ENCODE measurements at regions of chr13 and their contacts with region 1.

Region 1: DNA sequence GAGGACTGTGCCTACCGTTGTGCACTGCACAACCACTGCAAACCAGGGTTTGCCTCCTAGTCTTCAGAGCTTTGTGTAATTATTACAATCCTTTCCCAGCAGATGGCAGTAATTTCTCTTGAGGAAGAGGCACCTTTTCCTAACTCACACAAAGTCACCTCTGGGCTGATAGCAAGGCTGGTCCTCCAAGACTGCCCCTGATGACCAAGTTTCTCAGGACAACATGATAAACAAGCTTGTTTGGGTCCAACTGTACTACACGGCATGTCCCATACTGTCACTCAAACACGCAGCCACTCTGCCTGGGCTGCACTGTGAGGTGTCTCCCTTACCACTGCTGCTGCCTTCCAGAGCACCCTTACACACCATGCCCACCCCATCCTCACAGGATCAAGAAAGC is 39.3 kb downstream of the RFXAP start:
- DNase-seq: peak in 1 of 2 experiments; percentile 45
- H3K4me3 ChIP-seq: no peak overlapping the region
- H3K27ac ChIP-seq: no peak overlapping the region
- H3K4me1 ChIP-seq: peaks cover 9% of the 10 kb centered on the region
- H3K27me3 ChIP-seq: no peaks in the 10 kb centered on the region
- CTCF ChIP-seq: peak; percentile 65

Region 2: GRCh38 chr13:36981156-36981743 is 123.0 kb after region 1 on chr13:
- CTCF ChIA-PET with region 1: interaction called, 6 read pairs
- POLR2A ChIA-PET with region 1: interaction called, 6 read pairs
- intact Hi-C with region 1: loop called (anchors 5 kb)
- DNase-seq: no peak
- H3K4me3 ChIP-seq: no peak overlapping the region
- H3K27ac ChIP-seq: no peak overlapping the region
- H3K4me1 ChIP-seq: no peaks in the 10 kb centered on the region
- H3K27me3 ChIP-seq: no peaks in the 10 kb centered on the region
- CTCF ChIP-seq: peak; percentile 74

Region 3: GRCh38 chr13:37068962-37069361 is 210.7 kb after region 1 on chr13:
- CTCF ChIA-PET with region 1: no interaction called
- POLR2A ChIA-PET with region 1: no interaction called
- intact Hi-C with region 1: loop called (anchors 5 kb)
- DNase-seq: no peak
- H3K4me3 ChIP-seq: no peak overlapping the region
- H3K27ac ChIP-seq: no peak overlapping the region
- H3K4me1 ChIP-seq: no peaks in the 10 kb centered on the region
- H3K27me3 ChIP-seq: no peaks in the 10 kb centered on the region
- CTCF ChIP-seq: peak; percentile 61

Measured in PC-9 (cell line).